ENCODE measurements at regions of chr2 and their contacts with region 1.

Region 1: DNA sequence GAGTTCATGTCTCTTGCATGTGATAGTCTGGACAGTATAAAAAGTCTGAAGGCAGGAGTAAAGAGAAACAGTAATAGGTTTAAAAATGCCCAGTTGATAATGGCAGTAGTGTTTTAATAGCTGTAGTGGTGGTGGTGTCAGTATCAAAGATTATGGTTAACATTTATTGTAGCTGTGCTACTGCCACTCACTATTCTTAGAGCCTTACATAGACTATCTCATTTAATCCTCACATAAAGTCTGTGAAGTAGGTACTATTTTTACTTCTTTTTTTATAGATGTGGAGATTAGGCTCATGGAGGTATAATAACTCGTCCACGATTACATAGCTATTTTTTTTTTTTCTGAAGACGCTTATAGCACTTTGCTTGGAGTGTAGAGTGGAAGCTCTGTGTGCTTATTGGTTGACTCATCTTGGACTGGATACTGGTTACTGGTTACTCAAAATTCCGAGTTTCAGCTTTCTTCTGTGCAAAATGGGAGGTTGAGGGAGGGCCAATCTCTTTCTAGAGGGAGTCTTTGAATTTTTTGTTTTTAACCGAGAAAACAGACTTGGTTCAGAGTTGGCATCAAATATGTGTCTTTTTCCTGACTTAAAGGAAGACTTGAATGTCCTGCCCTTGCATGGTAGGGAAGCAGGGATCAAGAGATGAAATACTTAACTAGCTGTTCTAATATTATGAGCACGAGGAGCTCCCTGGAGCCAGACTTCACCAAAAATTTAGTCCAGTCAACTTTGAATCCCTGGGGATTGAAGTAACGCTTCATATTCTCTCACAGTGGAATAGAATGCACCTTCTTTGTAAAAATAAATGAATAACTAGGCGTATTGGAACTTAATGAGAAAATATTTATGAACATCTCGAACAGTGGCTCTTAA is 27.1 kb downstream of the CERS6 start:
- DNase-seq: no peak
- ATAC-seq: no peak
- H3K4me3 Mint-ChIP-seq: no peak overlapping the region
- H3K27ac Mint-ChIP-seq: no peak overlapping the region
- H3K4me1 Mint-ChIP-seq: peaks cover 32% of the 10 kb centered on the region
- H3K27me3 Mint-ChIP-seq: no peaks in the 10 kb centered on the region

Region 2: DNA sequence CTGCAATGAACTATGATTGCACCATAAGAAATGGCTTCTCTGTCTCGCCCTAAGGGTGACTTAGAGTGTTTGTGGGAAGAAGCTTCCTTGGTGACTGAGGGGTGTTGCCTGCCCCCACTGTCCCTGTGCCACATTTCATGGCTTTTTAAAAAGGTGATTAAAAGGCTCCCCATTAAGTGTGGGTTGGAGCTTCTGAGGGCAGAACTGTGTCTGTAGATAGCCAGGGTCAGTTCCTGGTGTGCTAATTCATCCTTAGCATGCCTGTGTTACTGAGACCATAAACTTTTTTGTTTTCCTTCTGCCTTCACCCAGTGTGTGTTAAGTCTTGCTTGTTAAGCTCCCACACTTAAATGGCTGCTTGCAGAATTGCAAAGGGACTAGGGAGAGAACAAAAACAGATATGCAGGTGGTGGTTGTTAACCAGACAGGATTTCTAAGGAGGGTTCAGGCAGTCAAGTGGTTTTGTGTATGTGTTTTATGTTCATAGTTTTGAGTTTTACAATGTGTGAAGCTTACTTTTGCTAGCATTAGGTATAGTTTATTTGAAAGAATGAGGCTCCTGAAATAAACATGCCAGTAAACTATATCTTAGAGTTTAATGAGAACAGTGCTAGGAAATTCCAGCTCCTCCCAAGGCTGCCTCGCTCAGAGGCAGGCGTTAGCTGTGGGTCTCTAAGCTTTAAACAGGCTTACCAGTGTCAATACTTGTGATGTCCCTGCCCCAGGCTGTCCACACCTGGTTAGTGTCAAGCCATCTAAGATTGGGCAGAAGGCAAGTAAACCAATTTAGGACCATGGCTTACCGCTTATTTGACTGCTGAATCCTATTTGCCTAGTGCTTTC is 12.7 kb before region 1 on chr2:
- CTCF ChIA-PET with region 1: interaction called, 8 read pairs
- POLR2A ChIA-PET with region 1: interaction called, 3 read pairs
- intact Hi-C with region 1: loop called in 1 of 2 experiments (anchors 1 kb)
- DNase-seq: no peak
- ATAC-seq: no peak
- H3K4me3 Mint-ChIP-seq: no peak overlapping the region
- H3K27ac Mint-ChIP-seq: no peak overlapping the region
- H3K4me1 Mint-ChIP-seq: peaks cover 52% of the 10 kb centered on the region
- H3K27me3 Mint-ChIP-seq: no peaks in the 10 kb centered on the region

Region 3: DNA sequence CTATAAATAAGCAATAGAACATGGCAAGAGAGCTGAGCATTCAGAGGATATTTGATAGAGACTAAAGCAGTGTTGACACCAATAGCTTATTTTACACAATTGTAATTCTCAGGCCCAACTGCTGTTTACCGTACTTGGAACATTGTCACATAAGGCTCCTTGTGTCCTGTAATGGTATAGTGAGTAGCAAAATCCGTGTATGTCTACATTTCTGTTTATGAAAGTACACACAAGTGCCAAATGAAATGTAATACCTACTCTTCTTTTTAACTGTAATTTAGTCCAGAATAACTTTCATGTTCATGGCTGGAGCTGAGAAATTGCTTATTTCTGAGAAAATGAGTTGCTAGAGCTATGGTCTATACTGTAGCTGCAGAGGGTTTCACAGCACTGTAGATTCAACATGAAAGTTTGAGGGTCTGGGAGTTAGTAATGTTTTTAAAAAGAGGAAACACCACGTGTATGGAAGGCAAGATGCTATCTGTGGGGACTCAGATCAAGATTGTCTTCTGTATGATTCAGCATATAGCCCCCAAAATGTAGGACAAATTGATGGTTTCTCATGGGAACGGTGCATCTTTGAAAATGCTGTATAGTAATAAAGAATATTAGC is 209.0 kb after region 1 on chr2:
- CTCF ChIA-PET with region 1: no interaction called
- POLR2A ChIA-PET with region 1: no interaction called
- intact Hi-C with region 1: no loop called
- DNase-seq: no peak
- ATAC-seq: peak; percentile 91
- H3K4me3 Mint-ChIP-seq: no peak overlapping the region
- H3K27ac Mint-ChIP-seq: no peak overlapping the region
- H3K4me1 Mint-ChIP-seq: peaks cover 12% of the 10 kb centered on the region
- H3K27me3 Mint-ChIP-seq: no peaks in the 10 kb centered on the region

Measured in activated CD4-positive, alpha-beta T cell treated with anti-CD3 and anti-CD28 coated beads for 36 hours (primary cell).